ENCODE measurements at regions of chr16 and their contacts with region 1.

Region 1: DNA sequence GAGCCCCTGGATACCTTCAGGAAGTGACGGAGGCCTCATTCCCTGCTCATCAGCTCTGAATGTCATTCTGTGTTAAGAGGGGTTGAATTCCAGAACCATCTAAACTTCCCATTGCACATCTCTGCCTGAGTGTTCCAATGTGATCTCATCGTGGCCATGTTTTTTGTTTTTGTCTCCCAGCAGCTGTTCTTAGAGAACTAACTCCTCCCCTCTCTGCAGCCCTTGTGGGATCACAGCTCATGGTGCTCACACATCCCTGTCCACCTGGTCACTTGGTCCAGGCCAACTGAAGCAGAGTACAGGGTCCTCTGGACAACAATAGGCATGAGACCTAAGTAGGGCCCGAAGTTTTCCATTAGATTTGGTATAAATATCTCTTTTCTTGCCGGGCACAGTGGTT is 6.0 kb upstream of the SYT17 start:
- DNase-seq: no peak
- H3K4me3 ChIP-seq: no peak overlapping the region
- H3K27ac ChIP-seq: no peak overlapping the region
- H3K4me1 ChIP-seq: no peaks in the 10 kb centered on the region
- H3K27me3 ChIP-seq: no peaks in the 10 kb centered on the region
- CTCF ChIP-seq: no peak
- POLR2A ChIP-seq: no peak

Region 2: GRCh38 chr16:20899477-20900298 is 1737.6 kb after region 1 on chr16:
- intact Hi-C with region 1: loop called (anchors 5 kb)
- DNase-seq: peak in 1 of 2 donors; percentile 41
- H3K4me3 ChIP-seq: peak overlapping the region; percentile 72 to 87 (median 78)
- H3K27ac ChIP-seq: peak overlapping the region; percentile 98 to 99
- H3K4me1 ChIP-seq: peaks cover 0 to 22% of the 10 kb centered on the region in 2 donors
- H3K27me3 ChIP-seq: no peaks in the 10 kb centered on the region
- CTCF ChIP-seq: no peak
- POLR2A ChIP-seq: no peak